Activated naive CD8-positive, alpha-beta T cell treated with anti-CD3 and anti-CD28 coated beads, Interleukin-2, amount 10 ng/mL, durations not matched to agents 7 days and 5 days (primary cell): ENCODE measurements at regions of chr5 and their contacts with region 1.

Region 1: DNA sequence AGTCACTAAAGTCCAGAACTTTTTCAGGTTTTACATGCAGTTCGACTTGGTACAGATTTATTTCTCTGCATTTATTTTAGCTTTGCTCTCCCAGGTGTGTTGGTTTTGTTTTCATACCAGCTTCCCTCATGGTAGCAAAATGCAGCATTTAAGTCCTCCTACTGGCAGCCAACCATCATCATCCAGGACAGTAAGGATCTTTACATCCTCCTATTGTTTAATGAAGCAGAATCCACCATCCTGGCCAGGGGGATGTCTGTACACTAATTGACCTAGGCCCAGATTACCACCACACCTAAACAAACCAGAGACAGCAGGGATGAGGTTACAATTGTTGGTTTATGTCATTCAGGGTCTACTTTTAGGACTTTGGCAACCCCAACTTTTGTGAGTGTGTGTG is 22.3 kb downstream of the CAMK4 start:
- DNase-seq: no peak
- ATAC-seq: peak; percentile 25
- H3K4me3 Mint-ChIP-seq: peak overlapping the region; percentile 51
- H3K27ac Mint-ChIP-seq: peak overlapping the region; percentile 57
- H3K4me1 Mint-ChIP-seq: peaks cover 66% of the 10 kb centered on the region
- H3K27me3 Mint-ChIP-seq: no peaks in the 10 kb centered on the region

Region 2: GRCh38 chr5:111234125-111234524 is 12.3 kb before region 1 on chr5:
- POLR2A ChIA-PET with region 1: interaction called, 11 read pairs
- DNase-seq: no peak
- ATAC-seq: peak; percentile 10
- H3K4me3 Mint-ChIP-seq: peak overlapping the region; percentile 83
- H3K27ac Mint-ChIP-seq: peak overlapping the region; percentile 97
- H3K4me1 Mint-ChIP-seq: peaks cover 85% of the 10 kb centered on the region
- H3K27me3 Mint-ChIP-seq: no peaks in the 10 kb centered on the region